GM18951 (cell line): ENCODE measurements at regions of chr15 and their contacts with region 1.

Region 1: DNA sequence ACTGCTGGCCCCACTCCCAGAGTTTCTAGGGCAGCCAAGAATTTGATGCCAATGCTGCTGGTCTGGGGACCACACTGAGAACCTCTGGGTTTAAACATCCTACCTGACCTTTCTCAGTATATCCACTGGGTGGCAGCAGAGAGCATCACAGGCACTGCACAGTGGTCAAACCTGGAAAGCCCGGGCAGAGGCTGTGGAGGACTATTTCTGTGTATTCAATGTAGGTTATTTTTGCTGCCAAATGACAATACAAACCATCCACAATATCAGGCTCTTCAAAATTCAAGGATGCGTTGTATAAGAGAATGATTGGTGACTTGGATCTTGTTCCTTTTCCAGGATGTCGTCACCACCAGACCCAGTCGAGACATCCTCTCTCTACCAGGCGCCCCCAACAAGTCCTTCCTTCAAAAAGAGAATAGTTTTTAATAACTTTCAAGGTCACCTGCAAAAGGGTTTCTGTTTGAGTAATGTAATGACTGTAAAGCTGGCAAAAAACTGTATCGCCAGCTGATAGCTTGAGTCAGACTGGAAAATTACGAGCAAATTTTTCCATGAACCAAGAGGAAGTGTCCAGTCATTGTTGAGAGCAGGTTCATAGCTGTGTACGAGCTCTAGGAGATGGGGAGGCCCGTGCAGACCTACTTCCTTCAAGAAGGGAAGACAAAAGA is 30.5 kb upstream of the MYZAP start:
- POLR2A ChIP-seq: no peak

Region 2: DNA sequence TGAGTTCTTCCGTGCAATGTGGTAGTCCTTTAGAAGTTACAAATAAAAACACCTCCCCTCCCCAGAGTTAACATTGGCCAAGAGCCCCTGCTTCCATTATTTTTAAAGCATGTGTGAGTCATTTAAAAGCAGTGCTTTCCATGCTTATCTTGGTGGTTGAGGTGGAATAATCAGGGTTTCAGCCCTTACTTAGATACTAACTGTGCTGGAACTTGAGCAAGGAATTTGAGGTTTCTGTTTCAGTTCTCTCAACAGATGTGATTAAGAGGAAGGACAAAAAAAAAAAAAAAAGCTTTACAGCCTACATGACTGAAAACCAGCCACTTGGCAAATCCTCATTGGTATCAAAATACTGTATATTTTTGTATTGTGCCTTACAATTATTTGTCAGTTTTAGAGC is 120.4 kb before region 1 on chr15:
- in situ Hi-C with region 1: no loop called
- POLR2A ChIP-seq: no peak

Region 3: DNA sequence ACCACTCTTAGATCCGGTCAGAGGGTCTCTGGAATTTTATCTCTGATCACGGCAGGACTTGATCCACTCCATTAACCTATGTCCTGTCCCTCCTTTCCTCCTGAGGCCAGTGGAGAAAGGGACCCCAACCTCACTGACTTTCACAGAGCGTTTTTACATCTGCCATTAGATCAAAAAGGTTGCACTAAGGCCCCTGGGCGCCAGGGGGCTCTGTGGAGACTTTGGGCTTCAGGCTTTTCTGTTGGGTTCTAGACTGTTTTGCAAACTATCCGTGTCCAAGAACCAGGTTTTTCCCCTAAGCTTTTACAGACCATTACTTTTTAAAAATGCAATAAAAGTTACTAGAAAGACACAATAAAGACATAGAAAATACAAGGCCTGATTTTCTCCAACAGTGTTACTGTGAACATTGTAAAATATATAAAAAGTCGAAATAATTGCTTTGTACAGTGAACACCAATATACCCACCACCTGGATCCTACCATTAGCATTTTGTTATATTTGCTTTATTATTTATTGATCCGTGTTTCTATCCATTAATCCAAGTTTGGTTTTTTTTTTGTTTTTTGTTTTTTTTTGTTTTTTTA is 305.1 kb after region 1 on chr15:
- in situ Hi-C with region 1: loop called (anchors 25 kb)
- POLR2A ChIP-seq: no peak

Region 4: GRCh38 chr15:59420986-59421618 is 1859.9 kb after region 1 on chr15:
- in situ Hi-C with region 1: no loop called
- POLR2A ChIP-seq: no peak